CD8-positive, alpha-beta T cell (primary cell): ENCODE measurements at regions of chr4 and their contacts with region 1.

Region 1: DNA sequence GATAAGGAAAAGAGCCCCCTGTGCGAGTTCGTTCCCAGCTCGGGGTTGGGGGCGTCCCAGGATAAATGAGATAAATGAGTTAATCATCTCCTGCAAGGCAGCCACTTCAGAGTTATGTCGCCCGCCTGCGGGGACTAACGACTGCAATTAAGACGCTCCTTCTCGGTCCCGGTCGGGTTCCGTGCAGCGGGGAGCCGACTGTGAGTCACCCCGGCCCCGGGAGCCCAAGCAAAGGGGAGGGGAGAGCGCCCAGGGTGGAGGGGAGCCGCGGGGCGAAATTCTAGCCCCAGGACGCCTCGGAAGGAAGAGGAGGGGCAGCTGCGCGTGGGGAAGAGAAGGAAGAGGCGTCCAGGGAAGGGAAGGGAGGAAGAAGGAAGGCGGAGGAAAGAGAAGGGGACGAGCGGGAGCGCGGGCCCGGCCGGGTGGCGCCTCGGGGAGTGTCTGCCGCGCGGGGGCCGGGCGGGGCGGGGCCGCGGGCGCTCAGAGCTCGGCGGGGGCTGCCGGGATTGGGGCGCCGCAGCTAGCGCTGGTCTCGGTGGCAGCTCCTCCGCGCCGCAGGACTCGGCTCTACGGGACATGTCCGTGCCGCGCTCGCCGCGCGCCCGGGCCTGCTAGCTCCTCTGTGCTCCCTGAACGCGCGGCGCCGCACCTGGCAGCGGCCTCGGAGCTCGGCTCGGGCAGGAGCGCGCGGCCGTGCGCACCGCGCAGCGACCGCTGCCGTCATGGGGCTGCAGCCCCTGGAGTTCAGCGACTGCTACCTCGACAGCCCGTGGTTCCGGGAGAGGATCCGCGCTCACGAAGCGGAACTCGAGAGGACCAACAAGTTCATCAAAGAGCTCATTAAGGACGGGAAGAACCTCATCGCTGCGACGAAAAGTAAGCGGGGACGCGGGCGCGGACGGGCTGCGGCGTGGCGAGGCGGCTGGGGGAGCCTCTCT is at the start of gene ARHGAP10:
- DNase-seq: peak; percentile 18 to 79 (median 72)
- ATAC-seq: peak; percentile 66
- H3K4me3 ChIP-seq: peak within 1 kb of the TSS; percentile 91
- H3K4me3 Mint-ChIP-seq: peak within 1 kb of the TSS; percentile 90
- H3K27ac ChIP-seq: peak within 1 kb of the TSS; percentile 55 to 60
- H3K27ac Mint-ChIP-seq: peak within 1 kb of the TSS; percentile 83
- H3K4me1 ChIP-seq: peaks cover 18% of the 10 kb centered on the region
- H3K4me1 Mint-ChIP-seq: peaks cover 32% of the 10 kb centered on the region
- H3K27me3 ChIP-seq: no peaks in the 10 kb centered on the region
- H3K27me3 Mint-ChIP-seq: peaks cover 2% of the 10 kb centered on the region
- CTCF ChIP-seq: no peak
- total RNA-seq, gene ARHGAP10: 7.2 to 7.4 TPM

Region 2: DNA sequence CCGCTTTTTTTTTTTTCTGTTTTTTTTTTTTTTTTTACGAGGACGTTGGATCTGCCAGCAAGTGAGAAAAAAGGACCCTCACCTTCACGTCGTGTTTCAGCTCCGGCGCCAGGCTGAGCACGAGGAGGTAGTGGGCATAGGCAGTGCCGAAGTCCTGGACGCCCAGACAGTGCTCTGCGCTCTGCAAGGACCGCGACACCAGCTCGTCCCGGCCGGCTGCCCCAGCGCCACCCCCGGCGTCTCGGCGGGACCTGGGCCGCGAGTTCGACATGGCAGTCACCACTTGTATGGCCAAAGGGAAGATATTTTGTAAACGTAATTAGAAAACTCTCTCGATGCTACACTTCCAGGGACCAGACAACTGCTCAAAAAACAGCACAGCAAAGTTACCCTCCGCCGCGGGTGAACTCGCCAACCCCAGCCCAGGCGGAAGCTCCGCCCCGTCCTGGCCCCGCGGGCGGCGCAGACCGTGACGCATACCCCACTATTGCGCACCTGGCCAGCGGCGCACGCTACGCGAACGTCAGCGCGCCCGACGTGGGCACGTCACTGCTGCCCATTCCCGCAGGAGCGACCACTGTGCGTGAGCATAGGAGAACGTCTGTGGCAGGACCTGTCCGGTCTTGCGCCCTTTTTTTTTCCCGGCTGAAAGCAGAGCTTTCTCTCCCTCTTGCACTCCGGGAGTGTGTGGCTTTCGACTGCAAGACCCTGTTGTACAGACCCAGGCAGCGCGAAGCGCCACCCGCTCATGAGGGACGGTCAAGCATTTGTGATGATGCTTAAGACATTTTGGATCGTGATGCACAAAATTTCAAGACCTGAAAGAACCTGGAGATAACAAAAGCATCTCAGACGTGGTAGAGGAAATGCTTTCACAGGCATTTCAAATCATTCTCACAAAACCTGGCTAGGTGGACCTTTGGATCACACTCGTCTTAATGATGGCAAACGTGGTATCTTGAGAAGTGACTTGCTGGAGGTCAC is 47.8 kb before region 1 on chr4 and contains the start of gene PRMT9:
- CTCF ChIA-PET with region 1: no interaction called
- POLR2A ChIA-PET with region 1: interaction called, 14 read pairs
- intact Hi-C with region 1: loop called (anchors 1 to 2 kb)
- DNase-seq: peak; percentile 74 to 94 (median 88)
- ATAC-seq: peak; percentile 97
- H3K4me3 ChIP-seq: peak within 1 kb of the TSS; percentile 68 to 98
- H3K4me3 Mint-ChIP-seq: peak within 1 kb of the TSS; percentile 98
- H3K27ac ChIP-seq: peak within 1 kb of the TSS; percentile 92 to 98
- H3K27ac Mint-ChIP-seq: peak within 1 kb of the TSS; percentile 99
- H3K4me1 ChIP-seq: peaks cover 11% of the 10 kb centered on the region
- H3K4me1 Mint-ChIP-seq: peaks cover 40% of the 10 kb centered on the region
- H3K27me3 ChIP-seq: no peaks in the 10 kb centered on the region
- H3K27me3 Mint-ChIP-seq: peaks cover 8% of the 10 kb centered on the region
- CTCF ChIP-seq: no peak
- total RNA-seq, gene PRMT9: 36.4 to 40.3 TPM

Region 3: DNA sequence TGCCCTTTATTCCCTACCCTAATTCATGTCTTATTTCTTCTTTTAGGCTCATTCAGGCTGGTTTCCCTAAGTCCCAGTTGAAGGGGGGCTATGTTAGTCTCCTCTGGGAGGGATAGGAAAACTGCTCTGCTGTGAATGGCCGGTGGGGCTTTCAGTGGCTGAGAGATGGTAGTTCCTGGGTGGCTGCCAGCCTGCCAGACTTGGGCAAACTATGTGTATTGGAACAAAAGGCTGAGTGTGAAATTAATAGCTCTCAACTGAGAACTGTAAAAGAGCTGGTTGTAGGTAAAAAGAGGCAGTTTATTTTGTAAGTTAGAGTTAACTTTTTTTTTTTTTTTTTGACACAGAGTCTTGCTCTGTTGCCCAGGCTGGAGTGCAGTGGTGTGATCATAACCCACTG is 28.8 kb after region 1 on chr4:
- CTCF ChIA-PET with region 1: no interaction called
- POLR2A ChIA-PET with region 1: no interaction called
- intact Hi-C with region 1: no loop called
- DNase-seq: no peak
- ATAC-seq: no peak
- H3K4me3 ChIP-seq: no peak overlapping the region
- H3K4me3 Mint-ChIP-seq: no peak overlapping the region
- H3K27ac ChIP-seq: no peak overlapping the region
- H3K27ac Mint-ChIP-seq: no peak overlapping the region
- H3K4me1 ChIP-seq: no peaks in the 10 kb centered on the region
- H3K4me1 Mint-ChIP-seq: no peaks in the 10 kb centered on the region
- H3K27me3 ChIP-seq: no peaks in the 10 kb centered on the region
- H3K27me3 Mint-ChIP-seq: no peaks in the 10 kb centered on the region
- CTCF ChIP-seq: no peak

Region 4: DNA sequence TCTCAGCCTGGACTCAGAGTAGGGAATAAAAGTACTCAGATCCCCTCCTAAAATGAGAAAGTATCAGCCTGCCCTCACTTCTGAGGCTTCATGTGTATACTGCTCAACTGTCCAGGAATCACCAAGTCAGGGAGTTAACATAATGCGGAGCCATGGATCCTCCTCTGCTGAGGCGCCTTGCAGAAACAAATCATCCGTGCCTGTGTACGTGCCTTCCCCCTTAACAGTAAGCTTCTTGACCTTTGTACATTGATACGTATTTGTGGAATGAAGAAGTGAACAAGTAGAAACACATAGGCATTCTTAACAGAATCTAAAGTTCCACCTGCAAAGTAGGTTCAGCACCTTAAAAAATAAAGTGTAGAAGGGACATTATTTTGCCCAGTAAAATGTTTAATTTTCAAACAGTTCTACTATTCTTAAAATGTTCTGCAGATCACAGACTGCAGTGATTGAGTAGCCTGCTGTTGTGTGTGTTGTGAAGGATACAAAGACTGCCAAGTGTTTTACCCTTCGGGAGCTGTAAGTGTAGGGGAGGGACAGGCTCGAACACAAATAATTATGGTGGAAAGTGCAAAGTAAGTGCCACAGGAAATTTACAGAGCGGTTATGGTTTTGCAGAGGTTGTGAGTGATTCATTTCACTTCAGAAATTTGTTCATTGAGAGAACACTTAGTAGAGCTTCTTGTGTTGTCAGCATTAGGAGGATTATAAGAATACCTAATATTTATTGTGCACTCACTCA is 61.9 kb after region 1 on chr4:
- CTCF ChIA-PET with region 1: no interaction called
- POLR2A ChIA-PET with region 1: interaction called, 7 read pairs
- intact Hi-C with region 1: loop called in 1 of 2 experiments (anchors 5 kb)
- DNase-seq: peak in 2 of 9 experiments; percentile 18 to 35
- ATAC-seq: no peak
- H3K4me3 ChIP-seq: no peak overlapping the region
- H3K4me3 Mint-ChIP-seq: peak overlapping the region; percentile 88
- H3K27ac ChIP-seq: no peak overlapping the region
- H3K27ac Mint-ChIP-seq: peak overlapping the region; percentile 3
- H3K4me1 ChIP-seq: peaks cover 19% of the 10 kb centered on the region
- H3K4me1 Mint-ChIP-seq: peaks cover 37% of the 10 kb centered on the region
- H3K27me3 ChIP-seq: no peaks in the 10 kb centered on the region
- H3K27me3 Mint-ChIP-seq: no peaks in the 10 kb centered on the region
- CTCF ChIP-seq: no peak

Region 5: GRCh38 chr4:147799986-147800555 is 68.2 kb after region 1 on chr4:
- CTCF ChIA-PET with region 1: no interaction called
- POLR2A ChIA-PET with region 1: interaction called, 7 read pairs
- intact Hi-C with region 1: loop called in 1 of 2 experiments (anchors 5 kb)
- DNase-seq: peak; percentile 30 to 93 (median 59)
- ATAC-seq: peak; percentile 91
- H3K4me3 ChIP-seq: no peak overlapping the region
- H3K4me3 Mint-ChIP-seq: peak overlapping the region; percentile 36
- H3K27ac ChIP-seq: no peak overlapping the region
- H3K27ac Mint-ChIP-seq: peak overlapping the region; percentile 47
- H3K4me1 ChIP-seq: peaks cover 15% of the 10 kb centered on the region
- H3K4me1 Mint-ChIP-seq: peaks cover 24% of the 10 kb centered on the region
- H3K27me3 ChIP-seq: no peaks in the 10 kb centered on the region
- H3K27me3 Mint-ChIP-seq: no peaks in the 10 kb centered on the region
- CTCF ChIP-seq: no peak